Heart left ventricle (tissue), 16 donors: ENCODE measurements at regions of chr20 and their contacts with region 1.

Region 1: GRCh38 chr20:60851826-60852704 is 400.0 kb upstream of the CDH4 start:
- DNase-seq: no peak
- ATAC-seq: peak in 1 of 4 donors; percentile 44
- H3K4me3 ChIP-seq: no peak overlapping the region
- H3K27ac ChIP-seq: no peak overlapping the region
- H3K4me1 ChIP-seq: no peaks in the 10 kb centered on the region
- H3K27me3 ChIP-seq: peaks cover 0 to 8% (median 0%) of the 10 kb centered on the region in 9 donors
- CTCF ChIP-seq: peak in 11 of 12 donors; percentile 12 to 49 (median 36)
- POLR2A ChIP-seq: no peak

Region 2: GRCh38 chr20:60262967-60263603 is 589.0 kb before region 1 on chr20:
- intact Hi-C with region 1: no loop called
- DNase-seq: no peak
- ATAC-seq: peak in 1 of 4 donors; percentile 44
- H3K4me3 ChIP-seq: no peak overlapping the region
- H3K27ac ChIP-seq: no peak overlapping the region
- H3K4me1 ChIP-seq: no peaks in the 10 kb centered on the region
- H3K27me3 ChIP-seq: peaks cover 0 to 19% (median 0%) of the 10 kb centered on the region in 9 donors
- CTCF ChIP-seq: peak; percentile 20 to 72 (median 56)
- POLR2A ChIP-seq: no peak

Region 3: DNA sequence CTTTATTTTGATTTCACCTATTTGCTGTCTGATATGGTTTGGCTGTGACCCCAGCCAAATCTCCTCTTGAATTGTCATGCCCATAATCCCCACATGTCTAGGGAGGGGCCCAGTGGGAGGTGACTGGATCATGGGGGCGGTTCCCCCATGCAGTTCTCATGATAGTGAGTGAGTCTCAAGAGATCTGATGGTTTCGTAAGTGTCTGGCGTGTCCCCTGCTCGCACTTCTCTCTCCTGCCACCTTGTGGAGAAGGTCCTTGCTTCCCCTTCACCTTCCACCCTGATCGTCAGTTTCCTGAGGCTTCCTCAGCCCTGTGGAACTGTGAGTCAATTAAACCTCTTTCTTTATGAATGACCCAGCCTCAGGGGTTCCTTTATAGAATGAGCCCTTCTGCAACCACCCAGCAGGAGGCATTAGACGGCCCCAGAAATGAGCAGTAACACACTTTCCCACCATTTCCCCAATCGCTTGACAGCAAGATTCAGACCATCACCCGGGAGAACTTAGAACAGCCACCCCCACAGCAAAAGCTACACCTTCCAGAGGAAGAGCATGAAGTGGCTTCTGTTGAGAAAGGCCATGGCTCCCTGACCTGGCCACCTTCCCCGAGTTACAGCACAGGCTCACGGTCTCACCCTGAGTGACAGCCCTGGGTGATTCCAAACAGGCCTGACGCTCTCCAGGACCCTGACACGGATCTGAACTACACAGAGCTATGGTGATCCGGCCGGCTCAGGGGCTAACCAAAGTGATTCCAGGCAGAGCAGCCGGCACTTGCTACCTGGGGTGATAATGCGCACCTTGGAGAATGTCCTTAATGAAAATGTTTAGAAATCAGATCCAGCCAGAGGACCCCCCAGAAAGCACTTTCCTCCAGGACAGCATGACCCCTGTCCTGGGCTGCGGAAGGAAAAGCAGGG is 268.8 kb after region 1 on chr20:
- intact Hi-C with region 1: loop called in 3 of 10 experiments (anchors 2 to 10 kb)
- DNase-seq: peak in 2 of 5 donors; percentile 46 to 52
- ATAC-seq: peak in 3 of 4 donors; percentile 44 to 64 (median 61)
- H3K4me3 ChIP-seq: no peak overlapping the region
- H3K27ac ChIP-seq: no peak overlapping the region
- H3K4me1 ChIP-seq: peaks cover 0 to 3% (median 0%) of the 10 kb centered on the region in 12 donors
- H3K27me3 ChIP-seq: peaks cover 0 to 3% (median 0%) of the 10 kb centered on the region in 9 donors
- CTCF ChIP-seq: peak; percentile 21 to 60 (median 45)
- POLR2A ChIP-seq: no peak

Region 4: GRCh38 chr20:61220160-61220559 is 368.1 kb after region 1 on chr20:
- intact Hi-C with region 1: loop called in 1 of 10 experiments (anchors 10 kb)
- DNase-seq: no peak
- ATAC-seq: no peak
- H3K4me3 ChIP-seq: no peak overlapping the region
- H3K27ac ChIP-seq: no peak overlapping the region
- H3K4me1 ChIP-seq: no peaks in the 10 kb centered on the region
- H3K27me3 ChIP-seq: peaks cover 0 to 36% (median under 1%) of the 10 kb centered on the region in 9 donors
- CTCF ChIP-seq: no peak
- POLR2A ChIP-seq: no peak